Activated CD8-positive, alpha-beta T cell treated with anti-CD3 and anti-CD28 coated beads for 36 hours (primary cell): ENCODE measurements at regions of chr1 and their contacts with region 1.

Region 1: DNA sequence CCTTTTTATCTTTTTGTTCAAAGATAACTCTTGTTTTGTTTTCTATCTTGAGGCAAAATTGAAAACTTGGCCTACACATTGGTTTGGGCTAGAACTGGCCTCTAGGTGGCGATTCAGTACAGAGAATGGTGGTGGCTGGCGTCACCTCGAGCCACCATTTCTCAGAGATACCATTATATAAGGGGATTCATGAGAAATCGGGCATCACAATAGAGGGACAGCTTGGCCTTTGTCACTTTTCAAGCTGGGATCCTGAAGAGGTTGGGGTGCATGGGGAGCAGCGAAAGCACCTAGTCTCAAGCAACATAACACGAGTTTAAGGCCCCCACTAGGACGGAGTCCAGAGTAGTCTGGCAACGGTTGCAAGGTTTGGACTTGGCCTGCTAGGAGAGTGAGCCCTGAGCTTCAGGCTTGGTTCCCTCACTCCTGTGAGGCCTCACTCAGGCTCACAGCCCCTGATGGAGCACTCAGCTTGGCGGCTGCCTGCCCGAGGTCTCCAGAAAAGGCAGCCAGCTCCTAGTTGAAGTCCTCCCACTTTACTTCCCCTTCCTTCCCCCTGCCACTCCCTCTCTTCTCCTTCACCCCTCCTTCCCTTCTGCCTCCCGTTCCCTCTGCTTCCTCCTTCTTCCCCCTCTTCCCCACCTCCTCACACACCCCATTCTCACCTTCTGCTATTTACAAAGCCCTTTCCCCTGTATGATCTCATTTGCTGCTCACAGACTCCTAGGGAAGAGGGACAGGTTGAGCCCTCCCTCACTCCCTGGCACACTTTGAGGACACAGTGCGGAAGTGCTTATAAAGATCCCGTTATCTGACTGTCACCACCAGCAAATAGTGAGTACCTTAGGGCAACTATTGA is 67.8 kb downstream of the LRIG2 start:
- DNase-seq: peak; percentile 78
- ATAC-seq: peak; percentile 94
- H3K4me3 Mint-ChIP-seq: no peak overlapping the region
- H3K27ac Mint-ChIP-seq: no peak overlapping the region
- H3K4me1 Mint-ChIP-seq: peaks cover 7% of the 10 kb centered on the region
- H3K27me3 Mint-ChIP-seq: no peaks in the 10 kb centered on the region
- CTCF ChIP-seq: peak; percentile 73

Region 2: DNA sequence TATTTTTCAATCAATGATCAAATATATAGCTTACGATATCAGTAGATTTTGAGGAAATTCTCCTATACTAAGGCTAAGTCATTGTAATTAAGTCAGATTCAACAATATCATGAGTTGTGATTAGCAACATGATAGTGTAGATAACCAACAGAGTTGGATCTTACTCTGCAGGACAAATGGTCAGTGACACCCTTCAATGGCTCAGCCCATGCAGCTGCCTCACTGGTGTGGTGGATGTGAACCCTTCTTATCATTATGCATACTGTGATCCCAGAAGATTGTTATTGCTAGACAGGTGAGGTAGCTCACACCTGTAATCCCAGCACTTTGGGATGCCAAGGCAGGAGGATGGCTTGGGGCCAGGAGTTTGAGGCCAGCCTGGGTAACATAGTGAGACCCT is 190.4 kb before region 1 on chr1:
- CTCF ChIA-PET with region 1: no interaction called
- POLR2A ChIA-PET with region 1: no interaction called
- intact Hi-C with region 1: no loop called
- DNase-seq: no peak
- ATAC-seq: no peak
- H3K4me3 Mint-ChIP-seq: no peak overlapping the region
- H3K27ac Mint-ChIP-seq: no peak overlapping the region
- H3K4me1 Mint-ChIP-seq: peaks cover 39% of the 10 kb centered on the region
- H3K27me3 Mint-ChIP-seq: no peaks in the 10 kb centered on the region
- CTCF ChIP-seq: no peak

Region 3: GRCh38 chr1:113129529-113130185 is 11.2 kb before region 1 on chr1:
- CTCF ChIA-PET with region 1: interaction called, 12 read pairs
- POLR2A ChIA-PET with region 1: no interaction called
- intact Hi-C with region 1: no loop called
- DNase-seq: peak; percentile 16
- ATAC-seq: no peak
- H3K4me3 Mint-ChIP-seq: no peak overlapping the region
- H3K27ac Mint-ChIP-seq: peak overlapping the region; percentile 67
- H3K4me1 Mint-ChIP-seq: peaks cover 58% of the 10 kb centered on the region
- H3K27me3 Mint-ChIP-seq: no peaks in the 10 kb centered on the region
- CTCF ChIP-seq: no peak

Region 4: DNA sequence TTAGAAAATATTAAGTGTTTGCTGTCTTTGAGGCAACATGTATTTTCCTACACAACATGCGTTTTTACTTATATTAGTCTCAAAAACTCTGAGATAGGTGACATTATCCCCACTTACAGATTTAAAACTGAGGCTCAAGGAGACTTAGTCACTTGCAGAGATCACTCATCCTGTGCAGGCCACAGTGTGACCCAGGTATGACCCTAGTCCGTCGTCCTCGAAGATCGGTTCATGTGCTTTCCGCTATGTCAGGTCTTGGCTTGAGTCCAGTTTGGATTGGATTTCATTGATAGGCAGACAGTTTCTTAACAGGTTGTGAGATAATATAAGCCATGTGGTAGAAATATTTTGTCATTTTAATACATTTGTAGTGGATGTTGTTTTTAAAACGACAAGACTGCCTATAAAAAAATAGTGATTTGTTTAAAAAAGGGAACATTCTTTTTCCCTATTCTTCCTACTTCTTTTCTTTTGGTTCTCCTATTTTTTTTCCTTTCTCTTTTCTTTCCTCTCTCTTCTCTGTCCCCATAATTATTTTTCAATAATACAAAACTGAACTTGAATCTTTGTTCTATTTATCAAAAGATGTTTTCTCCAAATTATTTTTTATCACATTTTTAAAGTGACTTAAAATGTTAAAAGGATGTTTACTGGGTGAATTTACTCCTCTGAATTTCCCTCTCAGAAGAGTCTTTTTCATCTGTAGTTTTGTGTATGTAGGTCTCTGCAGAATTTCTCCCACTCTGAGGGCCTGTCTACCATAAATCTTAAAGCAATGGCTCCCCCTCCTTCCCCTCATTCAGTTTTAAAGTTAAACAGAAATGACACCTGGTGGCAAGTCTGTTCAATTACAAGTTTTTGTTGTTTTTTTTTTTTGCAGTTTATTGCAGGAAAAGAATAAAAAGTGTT is 536.7 kb after region 1 on chr1:
- CTCF ChIA-PET with region 1: interaction called, 7 read pairs
- POLR2A ChIA-PET with region 1: no interaction called
- intact Hi-C with region 1: loop called (anchors 2 kb)
- DNase-seq: no peak
- ATAC-seq: no peak
- H3K4me3 Mint-ChIP-seq: no peak overlapping the region
- H3K27ac Mint-ChIP-seq: no peak overlapping the region
- H3K4me1 Mint-ChIP-seq: no peaks in the 10 kb centered on the region
- H3K27me3 Mint-ChIP-seq: no peaks in the 10 kb centered on the region
- CTCF ChIP-seq: peak; percentile 81